ENCODE measurements at regions of chr6 and their contacts with region 1.

Region 1: GRCh38 chr6:117449549-117450439 is 24.1 kb upstream of the ROS1 start:
- DNase-seq: peak; percentile 63
- H3K4me3 ChIP-seq: no peak overlapping the region
- H3K27ac ChIP-seq: no peak overlapping the region
- H3K27me3 ChIP-seq: no peaks in the 10 kb centered on the region
- CTCF ChIP-seq: peak; percentile 68

Region 2: GRCh38 chr6:117463762-117464665 is 14.2 kb after region 1 on chr6:
- CTCF ChIA-PET with region 1: interaction called, 10 read pairs
- POLR2A ChIA-PET with region 1: no interaction called
- DNase-seq: no peak
- H3K4me3 ChIP-seq: no peak overlapping the region
- H3K27ac ChIP-seq: peak overlapping the region; percentile 53
- H3K27me3 ChIP-seq: no peaks in the 10 kb centered on the region
- CTCF ChIP-seq: no peak

Region 3: DNA sequence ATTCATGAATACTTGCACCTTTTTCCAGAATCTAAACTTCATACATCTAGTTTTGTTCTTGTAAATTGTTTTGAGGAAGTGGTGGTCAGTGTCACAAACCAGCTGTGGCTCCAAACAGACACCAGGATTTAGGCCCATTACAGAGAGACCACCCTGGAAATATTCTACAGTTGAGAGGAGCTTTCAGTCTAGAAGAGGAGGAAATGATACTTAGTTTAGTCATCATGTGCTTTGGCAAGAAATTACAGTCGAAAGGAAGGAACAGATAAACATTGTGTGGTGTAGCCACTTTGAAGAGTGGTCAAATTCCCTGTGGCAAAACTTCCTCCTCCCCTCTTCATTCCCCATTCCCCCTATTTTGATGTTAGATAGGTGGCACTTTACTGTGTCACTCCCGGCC is 48.4 kb after region 1 on chr6:
- CTCF ChIA-PET with region 1: interaction called, 11 read pairs
- POLR2A ChIA-PET with region 1: no interaction called
- DNase-seq: no peak
- H3K4me3 ChIP-seq: no peak overlapping the region
- H3K27ac ChIP-seq: no peak overlapping the region
- H3K27me3 ChIP-seq: no peaks in the 10 kb centered on the region
- CTCF ChIP-seq: no peak

Region 4: DNA sequence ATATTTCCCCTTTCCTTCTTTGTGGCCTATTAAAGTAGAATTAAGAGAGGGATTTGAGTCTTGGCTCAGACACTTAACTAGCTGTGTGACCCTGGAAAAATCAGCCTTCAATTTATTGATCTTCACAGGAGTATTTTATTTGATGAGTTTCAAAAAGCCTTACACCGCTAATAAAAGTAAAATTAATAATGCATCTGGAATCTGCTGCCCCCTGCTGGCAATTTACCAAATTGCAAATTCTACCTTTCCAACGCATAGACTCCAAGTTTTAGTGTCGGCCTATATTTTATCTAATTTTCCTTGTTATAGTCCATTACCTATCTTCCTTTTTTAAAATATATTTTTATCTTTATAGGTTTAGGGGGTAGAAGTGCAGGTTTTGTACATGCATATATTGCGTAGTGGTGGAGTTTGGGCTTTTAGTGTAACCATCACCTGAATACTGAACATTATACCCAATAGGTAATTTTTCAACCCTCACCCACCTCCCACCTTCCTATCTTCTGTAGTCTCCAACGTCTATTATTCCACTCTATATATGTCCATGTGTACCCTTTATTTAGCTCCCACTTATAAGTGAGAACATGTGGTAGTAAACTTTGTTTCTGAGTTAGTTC is 106.2 kb after region 1 on chr6:
- CTCF ChIA-PET with region 1: interaction called, 197 read pairs
- POLR2A ChIA-PET with region 1: interaction called, 5 read pairs
- DNase-seq: no peak
- H3K4me3 ChIP-seq: no peak overlapping the region
- H3K27ac ChIP-seq: no peak overlapping the region
- H3K27me3 ChIP-seq: no peaks in the 10 kb centered on the region
- CTCF ChIP-seq: peak; percentile 77

Region 5: DNA sequence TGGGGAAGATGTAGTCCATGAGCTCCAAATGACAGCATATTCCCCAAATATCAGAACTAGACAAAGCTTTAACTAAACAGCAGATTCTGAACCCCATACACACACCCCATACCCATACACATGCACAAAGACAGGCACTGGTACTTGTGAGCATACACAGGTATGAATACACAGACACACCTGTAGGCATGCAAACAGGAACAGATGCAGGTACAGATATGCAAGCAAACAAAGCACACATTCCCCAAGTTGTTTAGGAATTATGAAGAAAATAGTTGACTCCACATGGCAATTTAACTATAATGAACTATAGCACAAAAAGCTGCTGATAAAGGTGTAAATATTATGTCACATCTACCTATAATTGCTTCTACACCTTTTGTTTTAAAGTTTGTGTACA is 135.9 kb after region 1 on chr6:
- CTCF ChIA-PET with region 1: interaction called, 17 read pairs
- POLR2A ChIA-PET with region 1: no interaction called
- DNase-seq: no peak
- H3K4me3 ChIP-seq: no peak overlapping the region
- H3K27ac ChIP-seq: no peak overlapping the region
- H3K27me3 ChIP-seq: no peaks in the 10 kb centered on the region
- CTCF ChIP-seq: no peak